OCI-LY7 (cell line): ENCODE measurements at regions of chr12 and their contacts with region 1.

Region 1: DNA sequence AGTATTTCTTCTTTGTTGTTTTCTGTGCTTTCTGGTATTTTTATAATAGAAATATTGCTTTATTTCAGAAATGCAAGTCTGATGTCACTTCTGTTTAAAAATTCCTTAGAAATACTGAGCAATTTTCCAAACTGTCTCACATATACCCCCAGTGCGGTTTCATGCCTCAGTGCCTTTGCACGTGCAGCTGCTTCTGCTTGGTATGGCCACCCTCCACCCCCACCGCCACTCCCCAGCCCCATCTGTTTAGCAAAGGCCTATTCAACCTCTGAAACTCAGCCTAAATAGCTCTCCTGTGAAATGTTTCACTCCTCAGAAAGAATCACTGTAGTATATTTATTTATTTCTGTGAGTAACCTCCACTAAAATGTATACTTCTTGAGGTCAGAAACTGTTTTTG is 52.3 kb downstream of the PPM1H start:
- DNase-seq: peak; percentile 62
- H3K4me3 ChIP-seq: peak overlapping the region; percentile 25
- H3K27ac ChIP-seq: peak overlapping the region; percentile 82
- H3K4me1 ChIP-seq: peaks cover 33% of the 10 kb centered on the region
- CTCF ChIP-seq: no peak

Region 2: DNA sequence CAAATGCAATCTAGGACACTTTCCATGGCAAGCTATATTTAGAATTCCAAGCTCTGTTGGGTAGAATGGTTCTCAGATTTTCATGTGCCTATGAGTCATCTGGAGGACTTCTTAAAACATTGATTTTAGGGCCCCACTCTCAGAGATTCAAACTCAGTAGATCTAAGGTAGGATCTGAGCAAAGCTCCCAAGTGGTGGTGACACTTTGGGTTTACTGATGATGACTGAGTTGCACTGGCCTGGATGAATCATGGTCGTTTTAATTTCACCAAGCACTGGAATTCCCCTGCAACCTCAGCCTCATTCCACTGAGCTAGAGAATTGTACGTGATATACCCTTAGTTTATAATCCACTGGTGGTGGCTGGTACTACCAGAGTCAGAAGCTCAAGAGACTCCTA is 34.3 kb before region 1 on chr12:
- CTCF ChIA-PET with region 1: no interaction called
- POLR2A ChIA-PET with region 1: interaction called, 10 read pairs
- intact Hi-C with region 1: no loop called
- DNase-seq: no peak
- H3K4me3 ChIP-seq: no peak overlapping the region
- H3K27ac ChIP-seq: no peak overlapping the region
- H3K4me1 ChIP-seq: no peaks in the 10 kb centered on the region
- CTCF ChIP-seq: no peak

Region 3: GRCh38 chr12:62934799-62935674 is 52.3 kb after region 1 on chr12 and contains the start of gene PPM1H:
- CTCF ChIA-PET with region 1: no interaction called
- POLR2A ChIA-PET with region 1: no interaction called
- intact Hi-C with region 1: loop called (anchors 2 kb)
- DNase-seq: peak; percentile 78
- H3K4me3 ChIP-seq: peak within 1 kb of the TSS; percentile 73
- H3K27ac ChIP-seq: no peak within 1 kb of the TSS
- H3K4me1 ChIP-seq: peaks cover 11% of the 10 kb centered on the region
- CTCF ChIP-seq: peak; percentile 76
- total RNA-seq, gene PPM1H: 3.4 and 3.6 TPM in 2 replicates